ENCODE measurements at regions of chr4 and their contacts with region 1.

Region 1: GRCh38 chr4:24980064-24980690 is 50.6 kb downstream of the LGI2 start:
- DNase-seq: peak; percentile 19
- ATAC-seq: peak; percentile 85
- H3K4me3 ChIP-seq: no peak overlapping the region
- H3K27ac ChIP-seq: no peak overlapping the region
- H3K4me1 ChIP-seq: no peaks in the 10 kb centered on the region
- H3K27me3 ChIP-seq: no peaks in the 10 kb centered on the region
- CTCF ChIP-seq: peak; percentile 76 to 82 (median 78)
- EP300 ChIP-seq: no peak
- POLR2A ChIP-seq: no peak
- RAD21 ChIP-seq: peak; percentile 63

Region 2: DNA sequence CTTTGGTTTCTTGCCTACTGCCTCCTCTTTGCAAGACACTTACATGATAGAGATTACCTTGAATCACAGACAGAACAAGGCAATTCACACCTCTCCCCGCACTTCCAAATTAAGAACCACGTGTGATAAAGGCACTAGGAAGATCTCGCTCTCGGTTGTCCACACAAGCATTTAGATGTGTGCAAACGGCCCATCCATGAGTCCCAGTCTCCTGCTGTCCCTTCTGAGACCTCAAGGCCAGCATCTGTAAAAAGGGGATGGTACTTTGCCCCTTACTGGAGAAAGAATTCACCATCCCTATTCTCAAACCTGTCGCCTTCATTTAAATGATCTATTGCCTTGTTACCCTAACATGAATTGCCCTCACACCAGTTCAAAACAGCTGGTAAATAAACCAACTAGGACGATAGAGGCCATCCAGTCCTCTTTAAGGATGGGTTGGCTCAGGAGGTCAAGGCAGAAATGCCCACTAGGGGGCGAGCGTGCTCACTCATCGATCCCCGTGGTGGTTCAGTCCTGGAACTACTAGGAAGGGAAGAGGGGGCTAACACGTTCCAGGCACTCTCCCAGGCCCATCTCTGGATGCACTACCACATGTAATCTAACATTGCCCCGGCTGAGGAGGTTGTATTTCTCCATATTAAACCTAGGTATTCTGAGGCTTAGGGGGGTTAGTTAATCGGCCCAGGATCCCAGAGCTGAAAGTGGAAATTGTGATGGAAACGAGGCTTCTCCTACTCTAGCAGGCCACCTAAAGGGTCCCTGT is 491.6 kb before region 1 on chr4:
- CTCF ChIA-PET with region 1: no interaction called
- POLR2A ChIA-PET with region 1: no interaction called
- RAD21 ChIA-PET with region 1: no interaction called
- SMC1A ChIA-PET with region 1: interaction called, 3 read pairs
- in situ Hi-C with region 1: no loop called
- intact Hi-C with region 1: loop called (anchors 5 kb)
- DNase-seq: peak; percentile 5
- ATAC-seq: peak; percentile 99
- H3K4me3 ChIP-seq: no peak overlapping the region
- H3K27ac ChIP-seq: no peak overlapping the region
- H3K4me1 ChIP-seq: no peaks in the 10 kb centered on the region
- H3K27me3 ChIP-seq: no peaks in the 10 kb centered on the region
- CTCF ChIP-seq: peak; percentile 82 to 94 (median 88); a peak in 5 of 6 replicates
- EP300 ChIP-seq: no peak
- POLR2A ChIP-seq: no peak
- RAD21 ChIP-seq: peak; percentile 79

Region 3: GRCh38 chr4:24995346-24995919 is 15.3 kb after region 1 on chr4:
- CTCF ChIA-PET with region 1: interaction called, 22 read pairs
- POLR2A ChIA-PET with region 1: interaction called, 3 read pairs
- RAD21 ChIA-PET with region 1: no interaction called
- SMC1A ChIA-PET with region 1: interaction called, 4 read pairs
- in situ Hi-C with region 1: no loop called
- intact Hi-C with region 1: no loop called
- DNase-seq: no peak
- ATAC-seq: no peak
- H3K4me3 ChIP-seq: no peak overlapping the region
- H3K27ac ChIP-seq: no peak overlapping the region
- H3K4me1 ChIP-seq: no peaks in the 10 kb centered on the region
- H3K27me3 ChIP-seq: no peaks in the 10 kb centered on the region
- CTCF ChIP-seq: no peak
- EP300 ChIP-seq: no peak
- POLR2A ChIP-seq: no peak
- RAD21 ChIP-seq: no peak

Region 4: DNA sequence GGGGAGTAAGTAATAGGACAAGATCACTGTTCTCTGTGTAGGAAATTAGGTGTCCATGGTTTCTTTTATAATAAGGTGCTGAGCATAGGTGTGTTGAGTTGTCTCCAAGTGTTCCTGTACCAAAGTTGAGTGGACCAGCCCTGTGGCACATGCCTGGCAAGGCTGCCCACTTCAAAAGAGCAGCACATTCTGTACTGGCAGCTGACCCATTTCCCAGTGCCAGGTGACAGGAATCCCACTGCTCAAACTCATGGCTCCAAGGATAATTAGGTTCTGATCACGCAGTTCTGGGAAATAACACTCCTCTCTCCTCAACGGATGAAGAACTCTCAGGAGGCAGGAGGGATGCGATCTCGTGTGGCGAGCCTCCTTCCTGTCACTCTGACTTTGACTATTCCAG is 63.4 kb after region 1 on chr4:
- CTCF ChIA-PET with region 1: interaction called, 15 read pairs
- POLR2A ChIA-PET with region 1: no interaction called
- RAD21 ChIA-PET with region 1: no interaction called
- SMC1A ChIA-PET with region 1: interaction called, 9 read pairs
- in situ Hi-C with region 1: no loop called
- intact Hi-C with region 1: no loop called
- DNase-seq: no peak
- ATAC-seq: no peak
- H3K4me3 ChIP-seq: no peak overlapping the region
- H3K27ac ChIP-seq: no peak overlapping the region
- H3K4me1 ChIP-seq: no peaks in the 10 kb centered on the region
- H3K27me3 ChIP-seq: no peaks in the 10 kb centered on the region; a peak in 1 of 4 replicates
- CTCF ChIP-seq: no peak
- EP300 ChIP-seq: no peak
- POLR2A ChIP-seq: no peak
- RAD21 ChIP-seq: no peak